ENCODE measurements at regions of chr14 and their contacts with region 1.

Region 1: DNA sequence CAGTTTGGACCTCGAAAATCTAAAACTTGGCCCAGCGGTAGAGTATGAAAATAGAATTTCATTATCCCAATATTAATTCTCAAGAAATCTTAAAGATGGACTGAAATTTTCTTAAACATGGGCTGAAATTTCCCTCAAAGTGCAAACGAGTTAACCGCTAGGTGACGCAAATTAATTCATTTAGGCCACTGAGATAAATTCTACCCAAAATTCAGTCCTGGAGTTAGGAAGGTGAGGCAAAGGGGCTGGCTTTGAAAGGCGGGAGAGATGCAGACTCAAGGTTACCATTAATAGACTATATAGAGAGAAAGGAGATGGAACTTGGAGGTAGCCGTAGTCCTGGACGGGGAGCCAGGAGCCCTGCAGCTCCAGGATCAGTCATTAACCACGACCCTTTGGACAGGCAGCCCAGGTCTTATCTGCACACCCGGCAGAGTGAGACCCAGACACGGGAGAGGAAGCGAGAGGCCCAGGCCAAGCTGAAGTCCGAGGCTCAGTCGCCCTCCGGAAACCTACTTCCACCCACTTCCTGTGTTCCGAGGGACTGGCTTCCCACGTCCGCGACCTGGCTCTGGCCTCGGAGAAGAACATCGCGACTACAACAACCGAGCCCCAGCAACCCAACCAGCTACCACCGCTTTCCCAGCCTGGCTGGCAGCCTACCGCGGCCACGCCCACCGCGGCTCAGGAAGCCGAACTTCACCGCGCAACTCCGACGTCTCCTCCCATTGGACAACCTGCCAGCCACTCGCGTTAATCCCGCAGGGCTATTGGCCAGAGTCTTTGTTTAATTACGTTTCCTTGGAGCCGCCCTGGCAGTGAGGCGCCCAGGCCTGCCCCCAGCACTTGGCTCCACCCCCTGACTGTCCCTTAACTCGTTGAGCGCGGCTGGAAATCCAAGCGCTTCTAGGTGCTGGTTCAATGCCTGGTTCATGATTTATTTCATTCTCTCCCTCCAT is at the start of gene EFCAB11:
- DNase-seq: peak; percentile 95 to 97 (median 95)
- H3K4me3 ChIP-seq: peak within 1 kb of the TSS; percentile 75 to 90 (median 76)
- H3K4me3 Mint-ChIP-seq: peak within 1 kb of the TSS; percentile 96 to 100
- H3K27ac ChIP-seq: peak within 1 kb of the TSS; percentile 97 to 99
- H3K27ac Mint-ChIP-seq: peak within 1 kb of the TSS; percentile 92 to 97 (median 96)
- H3K4me1 ChIP-seq: peaks cover 20 to 22% of the 10 kb centered on the region in 2 donors
- H3K4me1 Mint-ChIP-seq: peaks cover 31% of the 10 kb centered on the region
- H3K27me3 ChIP-seq: no peaks in the 10 kb centered on the region
- H3K27me3 Mint-ChIP-seq: peaks cover 0 to 3% (median 0%) of the 10 kb centered on the region in 3 donors
- CTCF ChIP-seq: no peak
- polyA plus RNA-seq, gene EFCAB11: 2.0 to 4.3 (median 2.1) TPM

Region 2: GRCh38 chr14:90060312-90060964 is 106.1 kb after region 1 on chr14:
- intact Hi-C with region 1: loop called in 1 of 2 experiments (anchors 10 kb)
- DNase-seq: peak; percentile 19 to 44 (median 31)
- H3K4me3 ChIP-seq: peak overlapping the region; percentile 43 to 84 (median 48)
- H3K4me3 Mint-ChIP-seq: peak overlapping the region; percentile 96 to 97
- H3K27ac ChIP-seq: no peak overlapping the region
- H3K27ac Mint-ChIP-seq: no peak overlapping the region
- H3K4me1 ChIP-seq: peaks cover 36 to 58% of the 10 kb centered on the region in 2 donors
- H3K4me1 Mint-ChIP-seq: peaks cover 48% of the 10 kb centered on the region
- H3K27me3 ChIP-seq: peaks cover 37 to 60% of the 10 kb centered on the region in 2 donors
- H3K27me3 Mint-ChIP-seq: peaks cover 47 to 73% (median 65%) of the 10 kb centered on the region in 3 donors
- CTCF ChIP-seq: peak; percentile 69

Region 3: DNA sequence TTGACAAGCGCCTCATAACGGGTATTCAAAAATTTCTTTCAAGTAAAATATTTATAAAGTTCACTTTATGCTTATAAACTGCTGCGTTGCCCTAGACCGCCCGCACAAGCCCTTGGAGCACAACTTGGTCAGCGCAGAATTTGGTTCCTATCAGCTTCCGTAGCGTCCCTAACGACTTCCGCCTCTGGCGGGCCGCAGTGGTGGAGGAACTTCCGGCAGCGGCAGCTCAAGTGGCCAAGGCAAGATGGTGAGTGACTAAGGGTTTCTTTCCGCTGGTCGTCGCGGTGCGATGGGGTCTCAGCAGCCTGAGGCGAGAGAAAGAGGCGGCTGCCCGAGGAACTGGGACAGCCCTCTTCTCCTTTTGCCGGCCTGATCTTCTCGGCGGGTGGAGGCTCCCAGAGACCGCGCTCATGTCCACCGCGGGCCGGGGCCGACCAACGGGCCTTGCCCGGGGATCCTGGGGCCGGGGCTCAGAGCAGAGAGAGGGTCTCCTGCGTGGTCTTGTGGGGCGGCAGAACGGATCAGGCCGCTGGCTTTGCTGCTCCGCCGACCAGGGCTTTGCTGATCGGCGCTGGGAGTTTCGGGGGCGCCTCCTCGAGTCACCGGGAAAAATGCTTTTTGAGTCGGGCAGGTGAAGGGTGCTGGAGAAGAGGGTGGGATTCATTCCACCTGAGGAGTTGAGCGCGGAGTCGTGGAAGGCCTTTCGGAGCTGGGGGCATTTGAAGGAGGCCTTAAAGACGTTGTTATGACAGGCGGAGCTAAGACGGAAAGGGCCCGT is 302.2 kb after region 1 on chr14 and contains the start of gene PSMC1:
- intact Hi-C with region 1: loop called (anchors 10 kb)
- DNase-seq: peak; percentile 89 to 93 (median 93)
- H3K4me3 ChIP-seq: peak within 1 kb of the TSS; percentile 69 to 97 (median 89)
- H3K4me3 Mint-ChIP-seq: peak within 1 kb of the TSS; percentile 97 to 99
- H3K27ac ChIP-seq: peak within 1 kb of the TSS; percentile 66 to 96
- H3K27ac Mint-ChIP-seq: peak within 1 kb of the TSS; percentile 81 to 96 (median 94)
- H3K4me1 ChIP-seq: peaks cover 14 to 23% of the 10 kb centered on the region in 2 donors
- H3K4me1 Mint-ChIP-seq: peaks cover 22% of the 10 kb centered on the region
- H3K27me3 ChIP-seq: peaks cover 0 to 4% of the 10 kb centered on the region in 2 donors
- H3K27me3 Mint-ChIP-seq: peaks cover 11 to 18% (median 18%) of the 10 kb centered on the region in 3 donors
- CTCF ChIP-seq: no peak
- polyA plus RNA-seq, gene PSMC1: 53.4 to 158 (median 128) TPM

Region 4: GRCh38 chr14:90399541-90400444 is 445.4 kb after region 1 on chr14:
- intact Hi-C with region 1: loop called in 1 of 2 experiments (anchors 5 kb)
- DNase-seq: peak; percentile 86 to 92 (median 90)
- H3K4me3 ChIP-seq: peak overlapping the region in 1 of 3 experiments; percentile 99
- H3K4me3 Mint-ChIP-seq: peak overlapping the region; percentile 59 to 60
- H3K27ac ChIP-seq: peak overlapping the region; percentile 32 to 61
- H3K27ac Mint-ChIP-seq: peak overlapping the region; percentile 68 to 95 (median 81)
- H3K4me1 ChIP-seq: peaks cover 32 to 42% of the 10 kb centered on the region in 2 donors
- H3K4me1 Mint-ChIP-seq: peaks cover 46% of the 10 kb centered on the region
- H3K27me3 ChIP-seq: no peaks in the 10 kb centered on the region
- H3K27me3 Mint-ChIP-seq: peaks cover 0 to 1% (median 0%) of the 10 kb centered on the region in 3 donors
- CTCF ChIP-seq: peak; percentile 100

Region 5: GRCh38 chr14:91060351-91061055 is 1106.2 kb after region 1 on chr14 and contains the start of gene RPS6KA5:
- intact Hi-C with region 1: loop called in 1 of 2 experiments (anchors 10 kb)
- DNase-seq: peak; percentile 100
- H3K4me3 ChIP-seq: peak within 1 kb of the TSS; percentile 81 to 88 (median 85)
- H3K4me3 Mint-ChIP-seq: peak within 1 kb of the TSS; percentile 82 to 85
- H3K27ac ChIP-seq: peak within 1 kb of the TSS; percentile 84 to 94
- H3K27ac Mint-ChIP-seq: peak within 1 kb of the TSS in 6 of 7 donors; percentile 11 to 82 (median 58)
- H3K4me1 ChIP-seq: peaks cover 30 to 34% of the 10 kb centered on the region in 2 donors
- H3K4me1 Mint-ChIP-seq: peaks cover 33% of the 10 kb centered on the region
- H3K27me3 ChIP-seq: no peaks in the 10 kb centered on the region
- H3K27me3 Mint-ChIP-seq: no peaks in the 10 kb centered on the region
- CTCF ChIP-seq: peak; percentile 16
- polyA plus RNA-seq, gene RPS6KA5: 4.4 to 10.1 (median 7.9) TPM